IMR-90 (cell line): ENCODE measurements at regions of chr15 and their contacts with region 1.

Region 1: GRCh38 chr15:92903941-92904831 is 4.1 kb downstream of the CHD2 start:
- DNase-seq: peak; percentile 98
- ATAC-seq: peak; percentile 85
- H3K4me3 ChIP-seq: peak overlapping the region; percentile 54
- H3K27ac ChIP-seq: peak overlapping the region; percentile 98
- H3K4me1 ChIP-seq: peaks cover 11% of the 10 kb centered on the region
- H3K27me3 ChIP-seq: no peaks in the 10 kb centered on the region
- CTCF ChIP-seq: no peak
- POLR2A ChIP-seq: peak; percentile 98
- RAD21 ChIP-seq: no peak

Region 2: DNA sequence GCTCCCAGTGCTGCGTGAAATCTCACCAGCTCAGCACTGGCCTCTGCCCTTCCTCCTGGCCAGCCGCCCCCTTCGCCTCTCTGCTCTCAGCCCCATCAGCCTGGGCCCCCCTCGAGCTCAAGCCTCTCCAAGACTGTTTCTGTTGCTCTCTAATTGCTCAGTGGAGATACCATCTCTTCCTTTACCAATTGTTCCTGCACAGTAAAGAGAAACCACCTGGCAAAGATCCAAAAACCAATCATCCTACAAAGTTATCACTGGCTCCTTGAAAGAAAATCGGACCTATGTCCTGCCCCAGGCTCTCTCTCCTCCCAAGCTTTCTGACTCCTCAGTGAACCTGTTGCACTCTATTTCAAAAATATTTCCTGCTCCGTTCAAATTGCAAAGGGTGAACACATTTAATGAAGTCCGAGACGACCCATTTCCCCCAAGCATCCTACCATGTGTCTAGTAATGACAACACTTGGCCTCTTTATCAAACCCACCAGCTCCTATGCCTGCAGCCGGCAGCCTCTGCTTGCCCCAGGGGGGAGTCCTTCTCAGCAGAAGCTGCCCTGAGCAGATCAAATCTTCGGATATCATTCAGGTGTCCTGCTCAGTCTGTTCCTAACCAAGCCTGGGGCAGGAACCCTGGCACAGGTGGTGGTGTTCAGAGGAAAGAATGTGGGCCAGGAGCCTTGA is 194.9 kb before region 1 on chr15:
- CTCF ChIA-PET with region 1: no interaction called
- POLR2A ChIA-PET with region 1: no interaction called
- dilution Hi-C with region 1: no loop called
- in situ Hi-C with region 1: no loop called
- intact Hi-C with region 1: no loop called
- DNase-seq: no peak
- ATAC-seq: no peak
- H3K4me3 ChIP-seq: no peak overlapping the region
- H3K27ac ChIP-seq: no peak overlapping the region
- H3K4me1 ChIP-seq: no peaks in the 10 kb centered on the region; the same call in 1 of the 2 replicates
- H3K27me3 ChIP-seq: no peaks in the 10 kb centered on the region; the same call in 1 of the 2 replicates
- CTCF ChIP-seq: no peak
- POLR2A ChIP-seq: no peak
- RAD21 ChIP-seq: no peak

Region 3: GRCh38 chr15:92820236-92821021 is 83.8 kb before region 1 on chr15:
- CTCF ChIA-PET with region 1: no interaction called
- POLR2A ChIA-PET with region 1: interaction called, 11 read pairs
- dilution Hi-C with region 1: no loop called
- in situ Hi-C with region 1: no loop called
- intact Hi-C with region 1: no loop called
- DNase-seq: peak; percentile 89
- ATAC-seq: peak; percentile 91
- H3K4me3 ChIP-seq: peak overlapping the region; percentile 42
- H3K27ac ChIP-seq: peak overlapping the region; percentile 87
- H3K4me1 ChIP-seq: peaks cover 13% of the 10 kb centered on the region
- H3K27me3 ChIP-seq: no peaks in the 10 kb centered on the region
- CTCF ChIP-seq: no peak
- POLR2A ChIP-seq: peak; percentile 66; the same call in 1 of the 2 replicates
- RAD21 ChIP-seq: no peak

Region 4: DNA sequence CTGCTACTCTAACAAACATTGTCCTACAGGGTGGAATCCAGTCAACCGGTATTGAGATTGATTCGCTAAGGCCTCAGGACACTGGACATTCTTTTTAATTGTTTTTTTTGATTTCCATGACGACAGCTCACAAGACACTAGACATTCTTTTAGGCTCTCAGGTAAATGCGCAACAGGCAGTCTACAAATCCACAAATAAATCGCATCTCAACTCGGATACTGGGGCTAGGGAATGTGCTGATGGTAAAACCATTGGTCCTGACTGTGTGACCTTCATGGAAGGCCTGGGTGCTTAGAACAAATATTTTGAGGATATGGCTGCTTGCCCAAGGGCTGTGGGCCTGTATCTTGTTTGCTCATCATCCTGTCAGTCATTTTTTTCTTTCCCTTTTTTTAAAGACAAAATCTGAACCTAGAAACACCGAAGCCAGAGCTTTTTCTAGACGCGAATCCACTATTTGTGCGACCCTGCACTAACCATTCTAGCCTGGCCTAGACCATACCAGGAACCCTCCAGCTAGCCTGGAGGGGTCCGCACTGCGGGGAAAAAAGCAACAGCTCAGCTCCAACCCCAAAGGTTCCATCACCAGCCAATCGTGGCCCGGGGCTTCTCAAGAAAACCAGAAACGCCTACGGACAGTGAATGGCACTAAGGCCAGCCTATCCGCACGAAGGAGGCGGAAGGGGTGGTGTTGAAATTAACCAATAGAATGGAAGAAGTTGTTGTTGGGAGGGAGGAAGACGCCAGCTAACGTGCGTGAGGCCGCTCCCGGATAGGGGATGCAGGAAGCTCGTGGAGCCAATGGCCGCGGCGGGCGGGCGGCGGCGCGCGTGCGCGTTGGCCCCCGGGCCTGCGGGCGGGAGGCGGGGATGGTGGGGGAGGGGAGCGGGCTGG is 22.1 kb before region 1 on chr15:
- CTCF ChIA-PET with region 1: interaction called, 5 read pairs
- POLR2A ChIA-PET with region 1: interaction called, 25 read pairs
- dilution Hi-C with region 1: no loop called
- in situ Hi-C with region 1: no loop called
- intact Hi-C with region 1: loop called (anchors 1 kb)
- DNase-seq: peak; percentile 100
- ATAC-seq: peak; percentile 94
- H3K4me3 ChIP-seq: peak overlapping the region; percentile 99
- H3K27ac ChIP-seq: peak overlapping the region; percentile 82
- H3K4me1 ChIP-seq: peaks cover 7% of the 10 kb centered on the region
- H3K27me3 ChIP-seq: no peaks in the 10 kb centered on the region
- CTCF ChIP-seq: no peak
- POLR2A ChIP-seq: 0 out of 2 replicates have a peak, but pooled peaks have one; percentile 44
- RAD21 ChIP-seq: no peak

Region 5: GRCh38 chr15:92917606-92918407 is 13.6 kb after region 1 on chr15:
- CTCF ChIA-PET with region 1: interaction called, 14 read pairs
- POLR2A ChIA-PET with region 1: interaction called, 3 read pairs
- dilution Hi-C with region 1: no loop called
- in situ Hi-C with region 1: no loop called
- intact Hi-C with region 1: loop called (anchors 2 kb)
- DNase-seq: peak; percentile 93
- ATAC-seq: peak; percentile 61
- H3K4me3 ChIP-seq: no peak overlapping the region
- H3K27ac ChIP-seq: peak overlapping the region; percentile 88; the same call in 1 of the 2 replicates
- H3K4me1 ChIP-seq: peaks cover 31% of the 10 kb centered on the region
- H3K27me3 ChIP-seq: no peaks in the 10 kb centered on the region
- CTCF ChIP-seq: peak; percentile 94
- POLR2A ChIP-seq: peak; percentile 33; the same call in 1 of the 2 replicates
- RAD21 ChIP-seq: peak; percentile 85

Region 6: GRCh38 chr15:92938387-92938786 is 34.2 kb after region 1 on chr15:
- CTCF ChIA-PET with region 1: interaction called, 3 read pairs
- POLR2A ChIA-PET with region 1: interaction called, 13 read pairs
- dilution Hi-C with region 1: no loop called
- in situ Hi-C with region 1: no loop called
- intact Hi-C with region 1: no loop called
- DNase-seq: no peak
- ATAC-seq: no peak
- H3K4me3 ChIP-seq: no peak overlapping the region
- H3K27ac ChIP-seq: no peak overlapping the region
- H3K4me1 ChIP-seq: no peaks in the 10 kb centered on the region; the same call in 1 of the 2 replicates
- H3K27me3 ChIP-seq: no peaks in the 10 kb centered on the region
- CTCF ChIP-seq: 0 out of 2 replicates have a peak, but pooled peaks have one; percentile 8
- POLR2A ChIP-seq: no peak
- RAD21 ChIP-seq: no peak

Region 7: GRCh38 chr15:93758824-93759223 is 854.6 kb after region 1 on chr15:
- CTCF ChIA-PET with region 1: no interaction called
- POLR2A ChIA-PET with region 1: no interaction called
- dilution Hi-C with region 1: no loop called
- in situ Hi-C with region 1: no loop called
- intact Hi-C with region 1: no loop called
- DNase-seq: no peak
- ATAC-seq: no peak
- H3K4me3 ChIP-seq: no peak overlapping the region
- H3K27ac ChIP-seq: no peak overlapping the region
- H3K4me1 ChIP-seq: no peaks in the 10 kb centered on the region
- H3K27me3 ChIP-seq: no peaks in the 10 kb centered on the region
- CTCF ChIP-seq: no peak
- POLR2A ChIP-seq: no peak
- RAD21 ChIP-seq: no peak